Naive thymus-derived CD4-positive, alpha-beta T cell (primary cell): ENCODE measurements at regions of chr9 and their contacts with region 1.

Region 1: DNA sequence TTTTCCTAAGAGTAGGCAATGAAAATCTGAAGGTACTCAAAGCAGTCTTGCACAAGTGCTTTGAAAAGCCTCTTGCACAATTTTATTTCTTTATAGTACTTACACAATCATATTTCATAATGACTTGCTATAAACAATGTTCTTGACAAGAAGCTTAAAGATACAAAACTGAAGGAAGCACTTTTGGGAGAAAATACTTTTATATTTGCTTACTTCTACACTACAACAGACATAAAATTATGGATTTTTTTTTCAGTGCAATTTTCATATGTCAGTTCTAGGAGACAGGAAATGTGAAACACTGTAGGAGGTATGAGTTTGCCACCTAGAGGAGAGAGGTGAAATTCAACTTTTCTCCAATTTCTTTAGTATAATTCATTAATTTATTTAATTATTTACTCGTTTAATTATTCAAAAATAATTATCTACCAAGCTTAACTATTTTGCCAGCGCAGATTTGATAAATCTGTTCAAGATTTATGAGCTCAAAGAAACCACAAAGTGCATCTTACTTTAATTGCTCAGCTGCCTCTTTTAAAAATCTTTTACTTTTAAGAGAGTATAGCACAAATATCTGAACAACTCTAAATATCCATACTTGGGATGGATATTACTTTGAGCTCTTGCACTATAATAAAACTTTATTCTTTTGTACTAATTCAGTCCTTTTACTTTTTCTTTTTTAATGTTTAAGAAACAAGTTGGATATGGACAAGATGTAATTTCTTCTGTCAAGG is 29.0 kb upstream of the CDKN2B start:
- DNase-seq: peak in 5 of 9 donors; percentile 7 to 39 (median 18)
- ATAC-seq: peak; percentile 63
- H3K4me3 ChIP-seq: no peak overlapping the region
- H3K4me3 Mint-ChIP-seq: no peak overlapping the region
- H3K27ac ChIP-seq: no peak overlapping the region
- H3K27ac Mint-ChIP-seq: no peak overlapping the region
- H3K4me1 ChIP-seq: peaks cover 0 to 5% of the 10 kb centered on the region in 2 donors
- H3K4me1 Mint-ChIP-seq: peaks cover 0 to 42% (median 4%) of the 10 kb centered on the region in 7 donors
- H3K27me3 ChIP-seq: no peaks in the 10 kb centered on the region
- H3K27me3 Mint-ChIP-seq: peaks cover 0 to 42% (median 0%) of the 10 kb centered on the region in 5 donors

Region 2: GRCh38 chr9:21326526-21327139 is 711.5 kb before region 1 on chr9:
- CTCF ChIA-PET with region 1: interaction called, 3 read pairs
- POLR2A ChIA-PET with region 1: no interaction called
- intact Hi-C with region 1: loop called in 1 of 2 experiments (anchors 5 kb)
- DNase-seq: peak in 7 of 9 donors; percentile 31 to 67 (median 56)
- ATAC-seq: peak; percentile 95
- H3K4me3 ChIP-seq: no peak overlapping the region
- H3K4me3 Mint-ChIP-seq: peak overlapping the region in 4 of 10 donors; percentile 17 to 62 (median 40)
- H3K27ac ChIP-seq: no peak overlapping the region
- H3K27ac Mint-ChIP-seq: peak overlapping the region in 3 of 9 donors; percentile 17 to 73 (median 35)
- H3K4me1 ChIP-seq: peaks cover 10 to 23% of the 10 kb centered on the region in 2 donors
- H3K4me1 Mint-ChIP-seq: peaks cover 32 to 67% (median 55%) of the 10 kb centered on the region in 7 donors
- H3K27me3 ChIP-seq: no peaks in the 10 kb centered on the region
- H3K27me3 Mint-ChIP-seq: no peaks in the 10 kb centered on the region

Region 3: GRCh38 chr9:21883642-21884041 is 154.5 kb before region 1 on chr9:
- CTCF ChIA-PET with region 1: no interaction called
- POLR2A ChIA-PET with region 1: no interaction called
- intact Hi-C with region 1: no loop called
- DNase-seq: no peak
- ATAC-seq: peak; percentile 66
- H3K4me3 ChIP-seq: no peak overlapping the region
- H3K4me3 Mint-ChIP-seq: no peak overlapping the region
- H3K27ac ChIP-seq: no peak overlapping the region
- H3K27ac Mint-ChIP-seq: peak overlapping the region in 1 of 9 donors; percentile 6
- H3K4me1 ChIP-seq: no peaks in the 10 kb centered on the region
- H3K4me1 Mint-ChIP-seq: peaks cover 0 to 4% (median 0%) of the 10 kb centered on the region in 7 donors
- H3K27me3 ChIP-seq: no peaks in the 10 kb centered on the region
- H3K27me3 Mint-ChIP-seq: no peaks in the 10 kb centered on the region

Region 4: DNA sequence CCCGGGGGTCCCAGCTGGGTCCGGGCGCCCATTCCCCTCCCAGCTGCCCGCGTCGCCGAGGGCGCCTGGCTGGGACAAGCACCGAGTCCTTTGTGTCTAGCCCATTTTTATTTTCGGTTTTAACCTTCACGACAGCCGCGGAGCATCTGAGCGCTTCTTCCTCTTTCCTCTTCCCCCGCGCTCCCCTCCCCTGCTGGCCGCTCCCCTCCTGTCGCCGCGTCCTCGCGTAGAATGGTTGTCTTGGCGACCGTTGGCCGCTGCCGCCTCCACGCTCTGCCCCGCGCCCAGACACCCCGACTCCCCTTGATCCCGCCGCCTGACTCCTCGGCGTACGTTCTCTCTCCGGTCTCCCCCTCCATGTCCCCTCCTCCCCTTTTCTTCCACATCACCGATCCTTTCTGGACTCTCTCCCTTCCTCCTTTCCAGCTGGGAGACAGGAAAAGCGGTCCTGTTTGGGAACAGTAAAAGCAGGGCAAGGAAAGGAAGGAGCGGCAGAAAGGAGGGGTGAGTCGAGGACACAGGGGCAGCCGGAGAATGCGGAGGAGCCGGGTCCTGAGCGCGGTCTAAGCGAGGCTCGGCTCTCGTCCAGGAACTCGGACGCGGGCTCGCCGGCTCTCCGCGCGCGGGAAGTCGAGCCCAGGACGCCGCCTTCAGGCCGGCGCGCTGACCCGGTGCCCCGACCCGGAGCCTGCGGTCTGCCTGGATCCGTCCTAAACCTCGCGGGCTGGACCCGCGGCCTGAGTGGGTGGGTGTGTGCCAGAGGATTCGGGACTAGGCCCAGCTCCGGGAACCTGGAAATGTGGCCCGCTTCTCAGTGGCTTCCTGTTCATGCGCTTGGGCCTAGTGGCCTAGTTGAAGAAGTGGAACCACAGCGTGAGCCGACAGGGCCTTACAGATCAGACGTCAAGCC is 42.7 kb before region 1 on chr9:
- CTCF ChIA-PET with region 1: no interaction called
- POLR2A ChIA-PET with region 1: no interaction called
- intact Hi-C with region 1: loop called (anchors 1 to 5 kb)
- DNase-seq: peak; percentile 52 to 74 (median 69)
- ATAC-seq: peak; percentile 88
- H3K4me3 ChIP-seq: peak overlapping the region; percentile 93
- H3K4me3 Mint-ChIP-seq: peak overlapping the region; percentile 88 to 97 (median 94)
- H3K27ac ChIP-seq: peak overlapping the region; percentile 37
- H3K27ac Mint-ChIP-seq: peak overlapping the region; percentile 29 to 98 (median 56)
- H3K4me1 ChIP-seq: peaks cover 8 to 16% of the 10 kb centered on the region in 2 donors
- H3K4me1 Mint-ChIP-seq: peaks cover 0 to 32% (median 13%) of the 10 kb centered on the region in 7 donors
- H3K27me3 ChIP-seq: peaks cover 0 to 18% of the 10 kb centered on the region in 2 donors
- H3K27me3 Mint-ChIP-seq: peaks cover 22 to 54% (median 44%) of the 10 kb centered on the region in 5 donors

Region 5: DNA sequence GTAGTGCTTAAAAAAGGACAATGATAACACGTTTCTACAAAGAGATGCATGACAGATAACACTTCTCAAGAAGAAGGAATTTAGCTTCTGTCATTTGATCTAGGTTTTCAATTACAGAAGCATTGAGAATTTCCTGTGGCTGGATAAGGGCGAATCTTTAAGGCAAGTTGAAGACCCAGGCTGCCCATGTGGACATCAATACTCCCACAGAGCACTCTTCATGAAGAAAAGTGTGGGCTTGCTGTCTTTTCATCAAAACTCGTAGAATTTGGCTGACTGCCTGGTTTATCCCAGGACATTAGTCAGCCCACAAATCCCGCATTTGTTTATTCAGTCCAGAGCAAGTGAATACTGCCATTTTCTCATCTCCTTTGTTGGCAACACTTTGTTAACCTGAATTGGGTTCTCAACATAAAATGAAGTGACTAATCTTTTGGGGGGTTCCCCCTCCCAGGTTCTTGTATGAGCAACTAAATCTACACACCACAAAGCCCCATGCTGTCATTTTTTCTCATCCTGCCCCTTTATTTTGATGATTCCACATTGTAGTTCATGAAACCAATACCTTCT is 14.3 kb after region 1 on chr9:
- CTCF ChIA-PET with region 1: interaction called, 11 read pairs
- POLR2A ChIA-PET with region 1: no interaction called
- intact Hi-C with region 1: loop called in 1 of 2 experiments (anchors 2 kb)
- DNase-seq: peak in 2 of 9 donors; percentile 10 to 34
- ATAC-seq: peak; percentile 49
- H3K4me3 ChIP-seq: no peak overlapping the region
- H3K4me3 Mint-ChIP-seq: peak overlapping the region in 2 of 10 donors; percentile 7 to 28
- H3K27ac ChIP-seq: no peak overlapping the region
- H3K27ac Mint-ChIP-seq: peak overlapping the region in 1 of 9 donors; percentile 70
- H3K4me1 ChIP-seq: peaks cover 14 to 23% of the 10 kb centered on the region in 2 donors
- H3K4me1 Mint-ChIP-seq: peaks cover 11 to 37% (median 29%) of the 10 kb centered on the region in 7 donors
- H3K27me3 ChIP-seq: no peaks in the 10 kb centered on the region
- H3K27me3 Mint-ChIP-seq: peaks cover 0 to 23% (median 0%) of the 10 kb centered on the region in 5 donors

Region 6: GRCh38 chr9:22238809-22239684 is 200.9 kb after region 1 on chr9:
- CTCF ChIA-PET with region 1: no interaction called
- POLR2A ChIA-PET with region 1: no interaction called
- intact Hi-C with region 1: loop called (anchors 2 to 10 kb)
- DNase-seq: peak in 1 of 9 donors; percentile 14
- ATAC-seq: no peak
- H3K4me3 ChIP-seq: no peak overlapping the region
- H3K4me3 Mint-ChIP-seq: peak overlapping the region in 1 of 10 donors; percentile 26
- H3K27ac ChIP-seq: no peak overlapping the region
- H3K27ac Mint-ChIP-seq: no peak overlapping the region
- H3K4me1 ChIP-seq: no peaks in the 10 kb centered on the region
- H3K4me1 Mint-ChIP-seq: peaks cover 0 to 35% (median 21%) of the 10 kb centered on the region in 7 donors
- H3K27me3 ChIP-seq: no peaks in the 10 kb centered on the region
- H3K27me3 Mint-ChIP-seq: peaks cover 0 to 55% (median 0%) of the 10 kb centered on the region in 5 donors